GM12878 (cell line): ENCODE measurements at regions of chr12 and their contacts with region 1.

Region 1: GRCh38 chr12:70576346-70577282 is 60.6 kb downstream of the PTPRB start:
- DNase-seq: peak; percentile 7
- ATAC-seq: peak; percentile 88
- H3K4me3 ChIP-seq: no peak overlapping the region
- H3K27ac ChIP-seq: no peak overlapping the region
- H3K4me1 ChIP-seq: no peaks in the 10 kb centered on the region
- H3K27me3 ChIP-seq: no peaks in the 10 kb centered on the region
- CTCF ChIP-seq: peak; percentile 61 to 81 (median 73)
- EP300 ChIP-seq: no peak
- POLR2A ChIP-seq: no peak
- RAD21 ChIP-seq: peak; percentile 98

Region 2: DNA sequence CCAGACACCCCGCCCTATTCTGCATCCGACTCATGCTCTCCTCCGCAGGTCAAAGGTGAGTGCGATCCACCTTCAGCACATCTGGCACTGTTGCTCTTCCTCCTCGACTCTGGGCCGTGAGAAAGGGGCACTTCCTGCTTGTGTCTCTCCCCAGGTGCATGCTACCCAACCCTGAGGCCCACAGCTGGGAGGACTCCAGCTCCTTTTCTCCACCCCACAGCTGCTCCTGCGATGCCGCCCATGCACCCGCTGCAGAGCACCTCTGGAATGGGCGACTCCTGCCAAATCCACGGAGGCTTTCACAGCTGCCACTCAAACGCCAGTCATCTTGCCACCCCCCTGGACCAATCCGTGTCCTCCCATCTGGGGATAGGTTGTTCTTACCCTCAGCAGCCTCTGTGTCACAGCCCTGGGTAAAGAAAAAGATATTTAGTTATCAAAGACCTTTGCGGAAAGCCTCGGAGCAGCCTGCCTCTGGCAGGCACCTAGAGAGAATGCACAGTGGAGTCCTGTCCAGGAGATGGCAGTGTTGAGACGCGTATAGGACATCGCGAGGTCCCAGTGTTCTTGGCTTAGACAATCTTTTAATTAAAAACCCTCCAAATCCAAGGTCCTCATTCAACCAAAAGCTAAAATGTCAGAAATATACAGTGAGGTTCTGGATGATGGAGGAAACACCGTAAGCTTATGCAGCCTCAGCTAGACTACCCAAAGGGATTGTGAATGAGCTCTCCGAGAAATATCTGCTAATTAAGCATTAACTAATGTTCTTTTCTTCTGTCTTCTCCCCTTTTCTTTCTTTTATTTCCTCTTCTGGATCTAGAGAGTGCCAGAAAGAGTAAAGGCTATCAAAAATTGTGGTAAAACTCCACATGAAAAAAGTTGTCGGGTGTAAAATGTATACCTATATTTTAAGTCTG is 697.3 kb before region 1 on chr12:
- CTCF ChIA-PET with region 1: interaction called, 32 read pairs
- POLR2A ChIA-PET with region 1: no interaction called
- RAD21 ChIA-PET with region 1: interaction called, 21 read pairs
- SMC1A ChIA-PET with region 1: interaction called, 10 read pairs
- in situ Hi-C with region 1: no loop called
- intact Hi-C with region 1: loop called (anchors 1 kb)
- DNase-seq: no peak
- ATAC-seq: peak; percentile 98
- H3K4me3 ChIP-seq: no peak overlapping the region
- H3K27ac ChIP-seq: no peak overlapping the region
- H3K4me1 ChIP-seq: no peaks in the 10 kb centered on the region
- H3K27me3 ChIP-seq: no peaks in the 10 kb centered on the region
- CTCF ChIP-seq: peak; percentile 80 to 87 (median 86)
- EP300 ChIP-seq: no peak
- POLR2A ChIP-seq: no peak
- RAD21 ChIP-seq: peak; percentile 94

Region 3: DNA sequence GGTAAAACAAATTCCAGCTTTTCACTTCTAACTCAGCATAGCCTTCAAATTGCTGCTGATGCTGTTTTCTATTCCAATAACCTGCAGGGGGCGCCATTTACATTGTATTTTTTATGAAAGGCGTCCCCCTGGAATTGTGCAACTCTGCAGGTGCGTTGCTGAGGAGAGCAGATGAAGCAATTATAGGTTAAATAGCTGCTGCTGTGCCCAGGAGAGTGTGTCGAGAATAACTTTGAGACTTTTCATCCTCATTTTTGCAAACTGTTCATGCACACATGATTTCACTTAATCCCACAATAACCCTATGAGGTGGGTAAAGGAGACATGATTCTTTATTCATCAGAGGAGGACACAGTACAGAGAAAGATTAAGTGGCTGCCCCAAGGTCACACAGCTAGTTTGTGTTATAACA is 675.9 kb before region 1 on chr12:
- CTCF ChIA-PET with region 1: interaction called, 80 read pairs
- POLR2A ChIA-PET with region 1: no interaction called
- RAD21 ChIA-PET with region 1: interaction called, 34 read pairs
- SMC1A ChIA-PET with region 1: interaction called, 44 read pairs
- in situ Hi-C with region 1: loop called (anchors 5 kb)
- intact Hi-C with region 1: loop called (anchors 1 kb)
- DNase-seq: no peak
- ATAC-seq: peak; percentile 88
- H3K4me3 ChIP-seq: no peak overlapping the region
- H3K27ac ChIP-seq: no peak overlapping the region
- H3K4me1 ChIP-seq: no peaks in the 10 kb centered on the region
- H3K27me3 ChIP-seq: no peaks in the 10 kb centered on the region
- CTCF ChIP-seq: peak; percentile 58 to 74 (median 66)
- EP300 ChIP-seq: no peak
- POLR2A ChIP-seq: no peak
- RAD21 ChIP-seq: peak; percentile 88

Region 4: DNA sequence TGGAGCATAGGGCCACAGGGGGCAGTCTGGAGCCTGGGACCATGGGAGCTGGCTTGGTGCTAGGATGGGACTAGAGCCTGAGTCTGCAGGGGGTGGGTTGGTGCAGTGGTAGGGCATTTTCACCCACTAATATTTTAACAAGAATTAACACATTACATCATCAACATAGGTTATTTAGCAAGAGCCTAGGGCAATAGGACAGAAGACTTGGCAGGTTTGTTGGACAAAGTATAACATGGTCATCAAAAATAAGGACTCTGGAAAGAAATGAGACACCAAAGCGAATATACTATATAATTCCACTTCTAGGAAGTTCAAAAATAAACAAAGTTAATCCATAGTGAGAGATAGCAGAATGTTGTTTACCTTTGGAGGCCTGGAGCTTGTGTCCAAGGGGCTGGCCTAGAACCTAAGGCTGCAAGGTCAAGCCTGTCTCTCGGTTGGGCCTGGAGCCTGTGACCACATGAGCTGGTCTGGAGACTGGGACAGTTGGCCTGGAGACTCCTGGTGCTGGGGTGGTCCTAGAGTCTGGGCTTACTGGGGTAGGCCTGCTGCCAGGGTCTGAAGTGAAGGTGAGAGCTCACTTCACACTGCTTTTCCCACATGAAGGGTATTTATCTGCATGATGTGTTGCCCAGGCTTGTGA is 361.5 kb before region 1 on chr12:
- CTCF ChIA-PET with region 1: interaction called, 3 read pairs
- POLR2A ChIA-PET with region 1: no interaction called
- RAD21 ChIA-PET with region 1: no interaction called
- SMC1A ChIA-PET with region 1: no interaction called
- in situ Hi-C with region 1: no loop called
- intact Hi-C with region 1: loop called (anchors 2 kb)
- DNase-seq: no peak
- ATAC-seq: no peak
- H3K4me3 ChIP-seq: no peak overlapping the region
- H3K27ac ChIP-seq: no peak overlapping the region
- H3K4me1 ChIP-seq: no peaks in the 10 kb centered on the region
- H3K27me3 ChIP-seq: no peaks in the 10 kb centered on the region
- CTCF ChIP-seq: no peak
- EP300 ChIP-seq: no peak
- POLR2A ChIP-seq: no peak
- RAD21 ChIP-seq: no peak

Region 5: DNA sequence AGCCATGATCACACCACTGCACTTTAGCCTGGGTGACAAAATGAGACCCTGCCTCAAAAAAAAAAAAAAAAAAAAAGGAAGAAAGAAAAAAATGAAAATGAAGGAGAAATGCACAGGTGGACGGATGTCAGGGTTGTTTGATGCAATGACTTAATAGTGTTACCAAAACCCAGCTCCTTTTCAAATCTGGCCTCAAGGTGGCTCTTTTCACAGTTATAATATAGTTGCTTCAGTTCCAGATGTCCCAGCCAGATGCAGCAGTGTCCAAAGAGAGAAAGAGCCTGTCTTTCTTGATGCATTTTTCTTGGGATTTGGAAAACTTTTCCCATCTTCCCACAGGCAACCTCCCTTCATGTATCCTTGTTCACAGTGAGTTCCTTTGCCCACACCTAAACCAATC is 174.0 kb before region 1 on chr12:
- CTCF ChIA-PET with region 1: interaction called, 6 read pairs
- POLR2A ChIA-PET with region 1: interaction called, 6 read pairs
- RAD21 ChIA-PET with region 1: interaction called, 10 read pairs
- SMC1A ChIA-PET with region 1: interaction called, 8 read pairs
- in situ Hi-C with region 1: no loop called
- intact Hi-C with region 1: loop called (anchors 5 kb)
- DNase-seq: no peak
- ATAC-seq: peak; percentile 54; the same call in 1 of the 3 replicates
- H3K4me3 ChIP-seq: no peak overlapping the region
- H3K27ac ChIP-seq: no peak overlapping the region
- H3K4me1 ChIP-seq: no peaks in the 10 kb centered on the region
- H3K27me3 ChIP-seq: no peaks in the 10 kb centered on the region
- CTCF ChIP-seq: peak in 2 of 3 experiments; percentile 7 to 15; a peak in 2 of 6 replicates
- EP300 ChIP-seq: no peak
- POLR2A ChIP-seq: no peak
- RAD21 ChIP-seq: peak; percentile 32

Region 6: GRCh38 chr12:70590051-70590450 is 13.4 kb after region 1 on chr12:
- CTCF ChIA-PET with region 1: interaction called, 12 read pairs
- POLR2A ChIA-PET with region 1: no interaction called
- RAD21 ChIA-PET with region 1: no interaction called
- SMC1A ChIA-PET with region 1: no interaction called
- in situ Hi-C with region 1: no loop called
- intact Hi-C with region 1: no loop called
- DNase-seq: no peak
- ATAC-seq: peak; percentile 93
- H3K4me3 ChIP-seq: no peak overlapping the region
- H3K27ac ChIP-seq: no peak overlapping the region
- H3K4me1 ChIP-seq: no peaks in the 10 kb centered on the region
- H3K27me3 ChIP-seq: no peaks in the 10 kb centered on the region
- CTCF ChIP-seq: peak; percentile 58 to 83 (median 83)
- EP300 ChIP-seq: no peak
- POLR2A ChIP-seq: no peak
- RAD21 ChIP-seq: peak; percentile 62